Activated naive CD4-positive, alpha-beta T cell treated with anti-CD3 and anti-CD28 coated beads for 36 hours (primary cell): ENCODE measurements at regions of chr19 and their contacts with region 1.

Region 1: GRCh38 chr19:34220472-34221063 is 33.8 kb upstream of the GARRE1 start:
- DNase-seq: peak; percentile 83
- H3K4me3 Mint-ChIP-seq: no peak overlapping the region
- H3K27ac Mint-ChIP-seq: peak overlapping the region; percentile 59
- H3K4me1 Mint-ChIP-seq: peaks cover 54% of the 10 kb centered on the region
- H3K27me3 Mint-ChIP-seq: no peaks in the 10 kb centered on the region

Region 2: DNA sequence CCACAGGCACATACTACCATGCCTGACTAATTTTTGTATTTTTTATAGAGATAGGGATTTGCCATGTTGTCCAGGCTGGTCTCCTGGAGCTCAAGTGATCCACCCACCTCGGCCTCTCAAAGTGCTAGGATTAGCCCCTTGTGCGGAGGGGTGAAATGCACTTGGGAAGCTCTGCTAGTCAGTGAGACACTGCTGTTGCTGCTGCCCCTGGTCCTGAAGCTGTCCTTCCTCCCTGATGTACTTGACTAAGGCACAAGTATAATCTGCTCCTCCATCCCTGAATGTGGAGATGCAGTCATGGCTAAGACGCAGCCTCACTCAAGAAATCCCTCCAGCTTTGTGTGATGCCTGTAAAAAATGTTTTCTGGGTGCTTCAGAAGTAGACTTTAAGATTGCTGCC is 299.4 kb before region 1 on chr19:
- CTCF ChIA-PET with region 1: no interaction called
- intact Hi-C with region 1: no loop called
- DNase-seq: no peak
- H3K4me3 Mint-ChIP-seq: no peak overlapping the region
- H3K27ac Mint-ChIP-seq: no peak overlapping the region
- H3K4me1 Mint-ChIP-seq: no peaks in the 10 kb centered on the region
- H3K27me3 Mint-ChIP-seq: peaks cover 23% of the 10 kb centered on the region

Region 3: GRCh38 chr19:34154401-34154800 is 66.2 kb before region 1 on chr19:
- CTCF ChIA-PET with region 1: no interaction called
- intact Hi-C with region 1: no loop called
- DNase-seq: no peak
- H3K4me3 Mint-ChIP-seq: no peak overlapping the region
- H3K27ac Mint-ChIP-seq: no peak overlapping the region
- H3K4me1 Mint-ChIP-seq: no peaks in the 10 kb centered on the region
- H3K27me3 Mint-ChIP-seq: no peaks in the 10 kb centered on the region

Region 4: GRCh38 chr19:34171877-34172660 is 48.5 kb before region 1 on chr19 and contains the start of gene LSM14A:
- CTCF ChIA-PET with region 1: interaction called, 4 read pairs
- intact Hi-C with region 1: loop called (anchors 1 kb)
- DNase-seq: peak; percentile 90
- H3K4me3 Mint-ChIP-seq: peak within 1 kb of the TSS; percentile 96
- H3K27ac Mint-ChIP-seq: peak within 1 kb of the TSS; percentile 99
- H3K4me1 Mint-ChIP-seq: peaks cover 38% of the 10 kb centered on the region
- H3K27me3 Mint-ChIP-seq: no peaks in the 10 kb centered on the region
- total RNA-seq, gene LSM14A: 87.9 to 102 TPM

Region 5: DNA sequence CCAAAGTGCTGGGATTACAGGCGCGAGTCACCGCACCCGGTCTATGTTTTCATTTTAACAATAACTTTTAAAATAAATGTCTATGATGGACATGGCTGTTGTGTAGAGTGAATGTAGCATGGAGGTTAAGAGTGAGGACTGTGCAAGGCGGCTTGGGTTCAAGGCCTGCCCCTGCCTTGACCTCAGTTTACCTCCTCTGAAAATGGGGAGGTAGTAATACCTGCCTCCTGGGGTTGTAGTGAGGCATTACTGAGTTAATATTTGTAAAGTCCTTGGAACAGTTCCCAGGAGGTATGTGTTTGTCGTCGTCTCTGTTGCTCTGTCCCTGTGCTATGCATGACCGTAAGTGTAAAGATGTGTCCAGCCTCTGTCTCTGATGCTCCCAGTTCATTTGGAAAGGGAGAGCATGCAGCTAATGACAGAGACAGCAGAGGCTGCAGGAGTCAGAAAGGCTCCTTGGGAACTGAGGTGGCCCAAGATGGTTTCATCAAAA is 43.2 kb after region 1 on chr19:
- CTCF ChIA-PET with region 1: no interaction called
- intact Hi-C with region 1: no loop called
- DNase-seq: no peak
- H3K4me3 Mint-ChIP-seq: no peak overlapping the region
- H3K27ac Mint-ChIP-seq: no peak overlapping the region
- H3K4me1 Mint-ChIP-seq: peaks cover 57% of the 10 kb centered on the region
- H3K27me3 Mint-ChIP-seq: no peaks in the 10 kb centered on the region

Region 6: DNA sequence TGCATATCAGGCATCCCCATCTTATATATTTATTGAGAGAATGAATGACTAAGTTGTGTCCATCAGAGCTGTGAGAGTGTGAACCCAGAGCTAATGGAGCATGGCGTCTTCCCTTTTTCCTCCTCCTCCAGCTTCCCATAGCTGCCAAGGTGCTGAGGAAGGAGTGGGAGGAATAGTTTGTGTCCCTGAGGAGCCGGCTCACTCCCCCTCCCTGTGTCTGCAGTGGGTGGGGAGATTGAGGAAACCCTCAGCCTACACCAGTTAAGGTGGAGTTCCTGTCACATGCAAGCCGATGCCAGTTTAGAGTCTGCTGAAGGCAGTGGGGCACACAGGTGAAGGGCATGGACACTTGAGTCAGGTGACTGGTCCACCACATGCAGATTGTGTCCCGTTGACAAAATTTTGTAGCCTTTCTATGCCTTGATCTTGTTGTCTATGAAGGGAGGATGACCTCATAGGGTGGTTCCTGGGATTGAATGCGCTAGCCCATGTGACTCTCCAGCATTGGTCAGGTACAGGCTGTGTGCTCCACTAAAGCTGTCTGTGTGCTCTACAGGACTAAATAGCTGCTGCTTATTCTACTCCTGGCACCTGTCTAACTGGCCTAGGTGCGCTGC is 96.9 kb after region 1 on chr19:
- CTCF ChIA-PET with region 1: interaction called, 4 read pairs
- intact Hi-C with region 1: loop called (anchors 5 kb)
- DNase-seq: peak; percentile 50
- H3K4me3 Mint-ChIP-seq: no peak overlapping the region
- H3K27ac Mint-ChIP-seq: peak overlapping the region; percentile 14
- H3K4me1 Mint-ChIP-seq: peaks cover 46% of the 10 kb centered on the region
- H3K27me3 Mint-ChIP-seq: no peaks in the 10 kb centered on the region

Region 7: GRCh38 chr19:34345947-34346351 is 125.4 kb after region 1 on chr19:
- CTCF ChIA-PET with region 1: interaction called, 14 read pairs
- intact Hi-C with region 1: loop called (anchors 1 kb)
- DNase-seq: peak; percentile 82
- H3K4me3 Mint-ChIP-seq: no peak overlapping the region
- H3K27ac Mint-ChIP-seq: no peak overlapping the region
- H3K4me1 Mint-ChIP-seq: peaks cover 17% of the 10 kb centered on the region
- H3K27me3 Mint-ChIP-seq: no peaks in the 10 kb centered on the region

Region 8: GRCh38 chr19:34501339-34502320 is 281.1 kb after region 1 on chr19:
- CTCF ChIA-PET with region 1: no interaction called
- intact Hi-C with region 1: loop called (anchors 10 kb)
- DNase-seq: peak; percentile 94
- H3K4me3 Mint-ChIP-seq: no peak overlapping the region
- H3K27ac Mint-ChIP-seq: no peak overlapping the region
- H3K4me1 Mint-ChIP-seq: peaks cover 9% of the 10 kb centered on the region
- H3K27me3 Mint-ChIP-seq: peaks cover 20% of the 10 kb centered on the region